HEK293 (cell line): ENCODE measurements at regions of chr14 and their contacts with region 1.

Region 1: DNA sequence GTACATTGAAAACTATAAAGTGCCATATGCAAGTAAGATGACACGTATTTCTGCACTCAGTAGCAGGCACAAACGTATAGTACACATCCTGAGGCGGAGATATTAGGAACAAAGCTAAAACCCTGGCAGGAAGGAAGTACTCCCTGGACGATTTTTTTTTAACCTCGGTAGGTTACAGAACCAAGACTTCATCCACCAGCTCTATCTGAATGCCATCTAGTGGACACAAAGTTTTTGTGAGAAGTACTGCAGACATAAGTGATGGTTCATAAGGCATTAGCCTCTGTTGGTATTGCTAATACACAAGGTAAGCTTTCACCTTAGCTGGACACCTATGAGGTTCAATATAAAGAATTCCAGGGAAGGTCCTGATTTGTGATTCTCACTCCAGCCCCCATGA is 83.0 kb upstream of the CCDC196 start:
- H3K4me3 ChIP-seq: no peak overlapping the region
- H3K27ac ChIP-seq: no peak overlapping the region
- H3K4me1 ChIP-seq: no peaks in the 10 kb centered on the region
- CTCF ChIP-seq: no peak

Region 2: GRCh38 chr14:66380143-66380542 is 23.0 kb before region 1 on chr14:
- CTCF ChIA-PET with region 1: interaction called, 13 read pairs
- POLR2A ChIA-PET with region 1: no interaction called
- H3K4me3 ChIP-seq: no peak overlapping the region
- H3K27ac ChIP-seq: no peak overlapping the region
- H3K4me1 ChIP-seq: no peaks in the 10 kb centered on the region
- CTCF ChIP-seq: no peak

Region 3: GRCh38 chr14:66413901-66414300 is 10.7 kb after region 1 on chr14:
- CTCF ChIA-PET with region 1: interaction called, 11 read pairs
- POLR2A ChIA-PET with region 1: no interaction called
- H3K4me3 ChIP-seq: no peak overlapping the region
- H3K27ac ChIP-seq: no peak overlapping the region
- H3K4me1 ChIP-seq: no peaks in the 10 kb centered on the region
- CTCF ChIP-seq: no peak

Region 4: DNA sequence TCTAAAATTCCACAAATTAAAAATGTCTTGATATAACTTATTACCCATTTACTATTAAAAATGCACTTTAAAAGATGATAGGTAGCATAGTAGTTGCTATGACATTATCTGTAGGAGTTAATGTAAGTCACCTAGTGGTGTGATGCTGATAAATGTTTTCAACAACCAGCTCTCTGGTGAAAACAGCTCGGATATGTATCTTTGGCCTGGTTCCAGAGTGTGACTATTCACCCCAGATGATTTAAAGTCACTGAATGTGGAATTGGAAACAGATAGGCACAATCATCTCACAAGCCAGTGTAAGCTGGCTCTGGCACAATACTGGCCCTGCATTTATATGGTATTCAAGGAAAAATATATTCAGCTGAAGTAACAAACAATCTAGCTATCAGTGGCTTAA is 73.8 kb after region 1 on chr14:
- CTCF ChIA-PET with region 1: no interaction called
- POLR2A ChIA-PET with region 1: no interaction called
- H3K4me3 ChIP-seq: no peak overlapping the region
- H3K27ac ChIP-seq: no peak overlapping the region
- H3K4me1 ChIP-seq: no peaks in the 10 kb centered on the region
- CTCF ChIP-seq: no peak